Activated naive CD4-positive, alpha-beta T cell treated with anti-CD3 and anti-CD28 coated beads, Interleukin-2, amount 10 ng/mL, durations not matched to agents 7 days and 5 days (primary cell): ENCODE measurements at regions of chr19 and their contacts with region 1.

Region 1: DNA sequence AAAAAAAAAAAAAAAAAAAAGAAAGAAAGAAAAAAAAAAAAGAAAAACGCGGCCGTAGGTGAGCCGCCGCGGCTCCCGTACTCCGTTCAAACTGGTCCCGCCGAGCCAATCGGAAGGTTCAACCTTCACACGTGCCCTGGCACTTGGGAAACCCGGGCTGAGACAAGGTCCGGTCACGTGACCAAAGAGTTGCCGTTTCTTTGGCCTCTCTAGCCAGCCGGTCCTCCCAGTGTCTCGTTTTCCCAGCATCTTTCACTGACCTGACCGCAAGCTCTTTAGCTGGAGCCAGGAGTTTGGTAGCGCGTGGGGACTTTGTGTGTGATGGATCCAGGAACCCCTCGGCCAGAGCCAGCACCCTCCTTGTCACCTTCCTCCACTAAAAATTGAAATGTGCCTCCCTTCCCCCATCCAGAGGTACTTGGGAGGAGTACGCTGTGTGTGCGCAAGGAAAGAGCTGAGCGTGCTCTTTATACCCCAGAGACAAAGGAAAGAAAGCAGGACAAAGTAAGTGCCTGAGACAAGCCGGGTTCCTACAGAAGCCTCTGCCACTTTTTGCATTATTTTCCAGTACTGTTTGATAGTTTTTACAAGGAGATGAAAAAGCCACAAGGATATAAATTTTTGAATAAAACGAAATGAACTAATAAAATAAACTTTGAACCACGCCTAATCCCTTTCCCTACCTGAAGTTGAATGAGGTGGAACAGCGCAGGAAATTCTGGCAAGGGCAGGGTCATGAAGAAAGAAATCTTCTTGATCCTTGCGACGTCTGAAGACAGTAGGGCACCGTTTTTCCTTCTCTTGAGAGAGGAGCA is 959 bp downstream of the TNPO2 start:
- DNase-seq: peak; percentile 97
- H3K4me3 Mint-ChIP-seq: peak overlapping the region; percentile 82
- H3K27ac Mint-ChIP-seq: peak overlapping the region; percentile 91
- H3K4me1 Mint-ChIP-seq: peaks cover 41% of the 10 kb centered on the region
- H3K27me3 Mint-ChIP-seq: peaks cover 4% of the 10 kb centered on the region

Region 2: GRCh38 chr19:12736995-12737834 is 14.4 kb after region 1 on chr19 and contains the start of gene GET3:
- CTCF ChIA-PET with region 1: interaction called, 48 read pairs
- DNase-seq: peak; percentile 88
- H3K4me3 Mint-ChIP-seq: peak within 1 kb of the TSS; percentile 100
- H3K27ac Mint-ChIP-seq: peak within 1 kb of the TSS; percentile 92
- H3K4me1 Mint-ChIP-seq: peaks cover 45% of the 10 kb centered on the region
- H3K27me3 Mint-ChIP-seq: no peaks in the 10 kb centered on the region